A549 (cell line): ENCODE measurements at regions of chr10 and their contacts with region 1.

Region 1: GRCh38 chr10:102394079-102394800 is 1.3 kb upstream of the NFKB2 start:
- DNase-seq: peak; percentile 95 to 98
- ATAC-seq: peak; percentile 82 to 90
- H3K4me3 ChIP-seq: peak overlapping the region; percentile 56
- H3K27ac ChIP-seq: peak overlapping the region; percentile 68 to 91
- H3K4me1 ChIP-seq: peaks cover 22% of the 10 kb centered on the region; the same call in 2 of the 3 replicates
- CTCF ChIP-seq: peak; percentile 96
- EP300 ChIP-seq: no peak; a peak in 1 of 5 replicates
- POLR2A ChIP-seq: no peak
- RAD21 ChIP-seq: peak in 1 of 2 experiments; percentile 85; a peak in 4 of 5 replicates

Region 2: DNA sequence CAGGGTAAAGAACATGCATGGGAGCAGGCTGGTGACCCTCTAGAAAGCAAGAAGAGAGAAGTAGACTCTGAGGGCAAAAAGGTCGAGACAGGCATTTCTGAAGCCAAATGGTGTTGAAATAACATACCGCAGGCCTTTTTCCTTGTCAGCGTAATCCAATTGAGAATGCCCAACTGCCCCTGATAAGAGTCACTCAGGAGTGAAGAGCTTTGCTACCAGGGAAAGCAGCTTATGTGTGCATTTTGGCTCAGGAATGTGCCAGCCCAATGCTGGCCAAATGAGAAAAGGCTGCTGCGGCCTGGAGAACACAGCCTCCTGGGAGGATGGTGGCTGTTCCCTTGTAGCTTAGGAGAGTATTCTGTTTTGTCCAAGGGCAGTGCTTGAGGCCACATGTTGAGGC is 60.1 kb before region 1 on chr10:
- CTCF ChIA-PET with region 1: interaction called, 10 read pairs
- POLR2A ChIA-PET with region 1: no interaction called
- DNase-seq: no peak
- ATAC-seq: no peak
- H3K4me3 ChIP-seq: no peak overlapping the region
- H3K27ac ChIP-seq: no peak overlapping the region
- H3K4me1 ChIP-seq: no peaks in the 10 kb centered on the region
- CTCF ChIP-seq: no peak
- EP300 ChIP-seq: no peak
- POLR2A ChIP-seq: no peak
- RAD21 ChIP-seq: no peak

Region 3: GRCh38 chr10:102368072-102368471 is 26.2 kb before region 1 on chr10:
- CTCF ChIA-PET with region 1: interaction called, 31 read pairs
- POLR2A ChIA-PET with region 1: no interaction called
- DNase-seq: peak in 1 of 2 experiments; percentile 48
- ATAC-seq: peak; percentile 51 to 78; a peak in 3 of 6 replicates
- H3K4me3 ChIP-seq: no peak overlapping the region
- H3K27ac ChIP-seq: peak overlapping the region; percentile 41 to 42; a peak in 4 of 6 replicates
- H3K4me1 ChIP-seq: peaks cover 22% of the 10 kb centered on the region
- CTCF ChIP-seq: no peak
- EP300 ChIP-seq: no peak
- POLR2A ChIP-seq: no peak
- RAD21 ChIP-seq: no peak

Region 4: DNA sequence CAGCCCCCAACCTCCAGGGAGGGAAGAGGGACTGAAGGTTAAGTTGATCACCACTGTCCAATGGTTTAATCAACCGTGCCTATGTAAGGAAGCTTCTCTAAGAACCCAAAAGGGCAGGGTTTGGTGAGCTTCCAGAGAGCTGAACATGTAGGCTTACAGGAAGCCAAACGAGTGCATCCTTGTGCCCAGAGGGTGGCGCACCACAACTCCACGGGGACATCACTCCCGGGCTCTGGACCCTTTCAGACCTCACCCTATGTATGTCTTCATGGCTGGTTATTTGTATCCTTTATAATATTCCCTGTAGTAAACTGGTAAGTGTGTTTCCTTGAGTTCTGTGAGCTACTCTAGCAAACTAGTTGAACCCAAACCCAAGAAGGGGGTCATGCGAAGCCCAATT is 10.2 kb before region 1 on chr10:
- CTCF ChIA-PET with region 1: interaction called, 133 read pairs
- POLR2A ChIA-PET with region 1: interaction called, 4 read pairs
- DNase-seq: no peak
- ATAC-seq: peak in 1 of 2 experiments; percentile 63; a peak in 3 of 6 replicates
- H3K4me3 ChIP-seq: no peak overlapping the region
- H3K27ac ChIP-seq: no peak overlapping the region
- H3K4me1 ChIP-seq: no peaks in the 10 kb centered on the region
- CTCF ChIP-seq: no peak
- EP300 ChIP-seq: no peak
- POLR2A ChIP-seq: no peak
- RAD21 ChIP-seq: no peak

Region 5: DNA sequence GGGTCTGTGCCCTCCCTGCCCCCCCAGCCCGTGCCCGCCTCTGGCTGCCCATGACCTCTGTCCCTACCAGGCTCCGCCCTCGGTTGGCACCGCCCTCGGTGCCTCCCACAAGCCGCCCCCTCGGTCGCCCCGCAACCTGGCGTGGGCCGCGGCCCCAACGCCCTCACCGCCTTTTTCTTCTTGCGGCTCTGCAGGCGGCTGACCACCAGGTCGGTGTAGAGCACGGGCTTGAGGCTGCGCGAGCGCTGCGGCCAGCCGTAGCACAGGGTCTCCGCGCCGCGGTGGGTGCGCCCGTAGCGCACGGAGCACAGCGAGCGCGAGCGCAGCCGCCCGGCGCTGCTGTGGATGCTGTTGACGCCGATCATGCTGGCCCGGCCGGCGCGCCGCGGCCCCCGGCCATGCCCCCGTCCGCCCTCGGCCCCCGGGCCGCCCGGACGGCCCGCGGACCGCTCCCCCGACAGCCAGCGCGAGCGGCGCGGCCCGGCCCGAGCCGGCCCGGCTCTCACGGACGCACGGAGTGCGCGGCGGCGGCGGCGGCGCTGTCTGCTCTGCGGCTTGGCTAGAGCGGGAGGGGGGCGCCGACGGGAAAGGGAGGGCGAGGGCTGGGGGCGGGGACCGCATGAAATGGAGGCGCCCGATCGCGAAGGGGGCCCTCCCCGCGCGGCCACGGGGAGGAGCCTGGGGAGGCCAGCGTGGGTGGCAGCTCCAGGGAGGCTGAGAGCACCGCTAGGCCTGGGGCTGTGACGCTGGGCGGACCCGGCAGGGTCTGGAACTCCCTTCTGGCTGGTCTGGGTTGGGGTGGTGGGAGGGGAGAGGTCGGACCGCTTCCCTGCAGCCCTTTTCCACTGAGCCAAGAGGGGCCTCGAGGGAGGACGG is 14.7 kb after region 1 on chr10:
- CTCF ChIA-PET with region 1: interaction called, 133 read pairs
- POLR2A ChIA-PET with region 1: interaction called, 10 read pairs
- DNase-seq: no peak
- ATAC-seq: peak; percentile 9 to 15; a peak in 4 of 6 replicates
- H3K4me3 ChIP-seq: peak overlapping the region; percentile 65
- H3K27ac ChIP-seq: peak overlapping the region; percentile 36 to 73; a peak in 4 of 6 replicates
- H3K4me1 ChIP-seq: peaks cover 3% of the 10 kb centered on the region; the same call in 1 of the 3 replicates
- CTCF ChIP-seq: no peak
- EP300 ChIP-seq: no peak
- POLR2A ChIP-seq: no peak
- RAD21 ChIP-seq: no peak

Region 6: GRCh38 chr10:102432162-102432950 is 38.1 kb after region 1 on chr10 and contains the start of gene CUEDC2:
- CTCF ChIA-PET with region 1: interaction called, 337 read pairs
- POLR2A ChIA-PET with region 1: interaction called, 5 read pairs
- DNase-seq: peak; percentile 96 to 97
- ATAC-seq: peak; percentile 95 to 96
- H3K4me3 ChIP-seq: peak within 1 kb of the TSS; percentile 87
- H3K27ac ChIP-seq: peak within 1 kb of the TSS; percentile 92 to 95
- H3K4me1 ChIP-seq: peaks cover 14% of the 10 kb centered on the region
- CTCF ChIP-seq: no peak
- EP300 ChIP-seq: no peak
- POLR2A ChIP-seq: peak; percentile 63; the same call in 1 of the 2 replicates
- RAD21 ChIP-seq: no peak; a peak in 1 of 5 replicates
- polyA plus RNA-seq, gene CUEDC2: 42.5 and 43.7 TPM in 2 replicates

Region 7: DNA sequence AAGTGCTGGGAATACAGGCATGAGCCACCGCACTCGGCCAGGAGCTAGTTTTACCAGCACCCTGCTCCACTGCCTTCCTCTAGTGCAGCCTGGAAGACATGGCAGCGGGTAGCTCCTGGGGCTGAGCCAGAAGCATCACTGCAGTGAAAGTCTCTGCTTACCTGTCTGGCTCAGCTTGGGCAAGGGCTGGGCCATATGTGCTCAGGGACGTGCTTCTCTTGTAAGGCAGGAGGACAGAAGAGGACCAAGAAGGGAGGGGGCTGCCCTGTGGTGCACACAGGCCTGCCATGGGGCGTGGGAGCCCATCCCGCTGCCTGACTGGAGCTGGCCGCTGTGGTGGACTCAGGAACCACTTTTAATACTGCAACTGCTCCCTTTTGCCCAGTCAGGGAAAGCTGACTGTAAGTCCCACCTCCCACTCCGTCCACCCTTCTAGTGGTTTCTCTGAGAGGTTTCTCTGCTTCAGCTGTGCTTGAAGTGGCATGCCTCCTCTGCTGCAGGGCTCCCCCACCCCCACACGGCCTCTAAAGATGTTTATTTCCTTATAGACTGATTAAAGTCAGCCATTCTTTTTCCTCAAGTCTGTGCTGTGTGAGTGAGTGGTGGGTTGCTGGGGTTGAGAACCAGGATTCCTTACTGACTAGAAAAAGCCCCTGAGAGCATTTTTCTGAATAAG is 82.4 kb after region 1 on chr10:
- CTCF ChIA-PET with region 1: interaction called, 93 read pairs
- POLR2A ChIA-PET with region 1: interaction called, 3 read pairs
- DNase-seq: no peak
- ATAC-seq: no peak
- H3K4me3 ChIP-seq: no peak overlapping the region
- H3K27ac ChIP-seq: no peak overlapping the region
- H3K4me1 ChIP-seq: no peaks in the 10 kb centered on the region
- CTCF ChIP-seq: no peak
- EP300 ChIP-seq: no peak
- POLR2A ChIP-seq: no peak
- RAD21 ChIP-seq: no peak